ENCODE measurements at regions of chr6 and their contacts with region 1.

Region 1: GRCh38 chr6:3732345-3733141 is 19.0 kb downstream of the PXDC1 start:
- DNase-seq: peak; percentile 50 to 63 (median 58)
- H3K4me3 ChIP-seq: no peak overlapping the region
- H3K4me3 Mint-ChIP-seq: peak overlapping the region in 1 of 8 donors; percentile 22
- H3K27ac ChIP-seq: no peak overlapping the region
- H3K27ac Mint-ChIP-seq: peak overlapping the region in 1 of 7 donors; percentile 55
- H3K4me1 ChIP-seq: peaks cover 3% of the 10 kb centered on the region
- H3K4me1 Mint-ChIP-seq: peaks cover 0 to 4% (median 2%) of the 10 kb centered on the region in 4 donors
- H3K27me3 ChIP-seq: no peaks in the 10 kb centered on the region
- H3K27me3 Mint-ChIP-seq: peaks cover 3 to 5% of the 10 kb centered on the region in 2 donors

Region 2: GRCh38 chr6:3125815-3126214 is 606.7 kb before region 1 on chr6:
- CTCF ChIA-PET with region 1: interaction called, 15 read pairs
- POLR2A ChIA-PET with region 1: no interaction called
- intact Hi-C with region 1: loop called (anchors 1 kb)
- DNase-seq: no peak
- H3K4me3 ChIP-seq: no peak overlapping the region
- H3K4me3 Mint-ChIP-seq: no peak overlapping the region
- H3K27ac ChIP-seq: no peak overlapping the region
- H3K27ac Mint-ChIP-seq: no peak overlapping the region
- H3K4me1 ChIP-seq: no peaks in the 10 kb centered on the region
- H3K4me1 Mint-ChIP-seq: peaks cover 0 to 4% (median 0%) of the 10 kb centered on the region in 4 donors
- H3K27me3 ChIP-seq: no peaks in the 10 kb centered on the region
- H3K27me3 Mint-ChIP-seq: no peaks in the 10 kb centered on the region

Region 3: GRCh38 chr6:3281631-3282475 is 450.7 kb before region 1 on chr6:
- CTCF ChIA-PET with region 1: interaction called, 242 read pairs
- POLR2A ChIA-PET with region 1: interaction called, 5 read pairs
- intact Hi-C with region 1: loop called (anchors 1 kb)
- DNase-seq: no peak
- H3K4me3 ChIP-seq: no peak overlapping the region
- H3K4me3 Mint-ChIP-seq: no peak overlapping the region
- H3K27ac ChIP-seq: no peak overlapping the region
- H3K27ac Mint-ChIP-seq: peak overlapping the region in 2 of 7 donors; percentile 8 to 10
- H3K4me1 ChIP-seq: peaks cover 3% of the 10 kb centered on the region
- H3K4me1 Mint-ChIP-seq: peaks cover 4 to 8% (median 6%) of the 10 kb centered on the region in 4 donors
- H3K27me3 ChIP-seq: no peaks in the 10 kb centered on the region
- H3K27me3 Mint-ChIP-seq: no peaks in the 10 kb centered on the region

Region 4: GRCh38 chr6:3410385-3411360 is 321.9 kb before region 1 on chr6:
- CTCF ChIA-PET with region 1: interaction called, 11 read pairs
- POLR2A ChIA-PET with region 1: no interaction called
- intact Hi-C with region 1: loop called (anchors 1 kb)
- DNase-seq: peak; percentile 41 to 59 (median 54)
- H3K4me3 ChIP-seq: no peak overlapping the region
- H3K4me3 Mint-ChIP-seq: no peak overlapping the region
- H3K27ac ChIP-seq: no peak overlapping the region
- H3K27ac Mint-ChIP-seq: peak overlapping the region in 4 of 7 donors; percentile 47 to 81 (median 76)
- H3K4me1 ChIP-seq: peaks cover 11% of the 10 kb centered on the region
- H3K4me1 Mint-ChIP-seq: peaks cover 10 to 18% (median 16%) of the 10 kb centered on the region in 4 donors
- H3K27me3 ChIP-seq: no peaks in the 10 kb centered on the region
- H3K27me3 Mint-ChIP-seq: no peaks in the 10 kb centered on the region

Region 5: DNA sequence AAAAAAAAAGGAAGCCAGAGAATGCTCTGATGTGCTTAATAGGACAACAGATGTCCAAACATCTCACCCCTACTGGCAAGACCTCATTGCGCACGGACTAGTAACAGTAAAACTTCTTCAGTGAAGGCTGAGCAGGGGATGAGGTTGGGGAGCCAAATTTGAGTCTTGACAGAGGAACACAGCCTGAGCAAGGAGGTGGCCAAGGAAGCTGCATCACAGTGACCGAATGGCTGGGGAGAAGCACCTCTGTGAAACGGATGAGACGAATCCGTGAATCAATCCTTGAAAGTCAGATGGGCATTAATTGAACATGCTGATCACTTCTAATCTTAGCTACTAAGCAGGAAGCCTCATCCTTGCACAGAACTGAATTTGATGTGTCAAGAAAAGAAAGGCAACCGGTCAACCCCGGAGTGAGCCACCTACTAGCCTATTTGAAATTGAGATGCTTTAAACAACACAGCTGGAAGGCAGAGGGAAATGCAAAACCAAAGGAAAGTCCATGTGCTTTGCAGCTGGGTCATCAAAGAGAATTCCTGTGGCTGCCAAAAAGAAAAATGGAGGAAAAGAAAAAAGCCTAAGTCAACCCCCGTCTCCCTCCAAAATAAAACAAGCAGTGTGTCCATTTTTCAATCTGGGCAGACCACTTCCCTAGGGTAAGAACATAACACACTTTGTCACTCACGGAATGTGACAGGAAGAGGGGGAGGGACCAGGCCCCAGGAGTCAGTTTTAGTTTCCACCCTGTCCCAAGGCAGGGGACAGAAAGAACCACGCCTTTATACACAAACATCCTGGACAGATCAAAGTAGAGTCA is 10.5 kb before region 1 on chr6:
- CTCF ChIA-PET with region 1: interaction called, 10 read pairs
- POLR2A ChIA-PET with region 1: no interaction called
- intact Hi-C with region 1: no loop called
- DNase-seq: no peak
- H3K4me3 ChIP-seq: no peak overlapping the region
- H3K4me3 Mint-ChIP-seq: no peak overlapping the region
- H3K27ac ChIP-seq: no peak overlapping the region
- H3K27ac Mint-ChIP-seq: peak overlapping the region in 1 of 7 donors; percentile 53
- H3K4me1 ChIP-seq: no peaks in the 10 kb centered on the region
- H3K4me1 Mint-ChIP-seq: peaks cover 0 to 2% (median 0%) of the 10 kb centered on the region in 4 donors
- H3K27me3 ChIP-seq: no peaks in the 10 kb centered on the region
- H3K27me3 Mint-ChIP-seq: peaks cover 0 to 3% of the 10 kb centered on the region in 2 donors

Measured in CD4-positive, alpha-beta memory T cell (primary cell).